PC-3 (cell line): ENCODE measurements at regions of chr15 and their contacts with region 1.

Region 1: GRCh38 chr15:83559310-83559966 is 94.5 kb upstream of the ADAMTSL3 start:
- DNase-seq: peak; percentile 87
- ATAC-seq: peak; percentile 81
- H3K4me3 ChIP-seq: no peak overlapping the region
- H3K27ac ChIP-seq: no peak overlapping the region
- H3K4me1 ChIP-seq: no peaks in the 10 kb centered on the region
- H3K27me3 ChIP-seq: no peaks in the 10 kb centered on the region
- CTCF ChIP-seq: peak; percentile 94

Region 2: DNA sequence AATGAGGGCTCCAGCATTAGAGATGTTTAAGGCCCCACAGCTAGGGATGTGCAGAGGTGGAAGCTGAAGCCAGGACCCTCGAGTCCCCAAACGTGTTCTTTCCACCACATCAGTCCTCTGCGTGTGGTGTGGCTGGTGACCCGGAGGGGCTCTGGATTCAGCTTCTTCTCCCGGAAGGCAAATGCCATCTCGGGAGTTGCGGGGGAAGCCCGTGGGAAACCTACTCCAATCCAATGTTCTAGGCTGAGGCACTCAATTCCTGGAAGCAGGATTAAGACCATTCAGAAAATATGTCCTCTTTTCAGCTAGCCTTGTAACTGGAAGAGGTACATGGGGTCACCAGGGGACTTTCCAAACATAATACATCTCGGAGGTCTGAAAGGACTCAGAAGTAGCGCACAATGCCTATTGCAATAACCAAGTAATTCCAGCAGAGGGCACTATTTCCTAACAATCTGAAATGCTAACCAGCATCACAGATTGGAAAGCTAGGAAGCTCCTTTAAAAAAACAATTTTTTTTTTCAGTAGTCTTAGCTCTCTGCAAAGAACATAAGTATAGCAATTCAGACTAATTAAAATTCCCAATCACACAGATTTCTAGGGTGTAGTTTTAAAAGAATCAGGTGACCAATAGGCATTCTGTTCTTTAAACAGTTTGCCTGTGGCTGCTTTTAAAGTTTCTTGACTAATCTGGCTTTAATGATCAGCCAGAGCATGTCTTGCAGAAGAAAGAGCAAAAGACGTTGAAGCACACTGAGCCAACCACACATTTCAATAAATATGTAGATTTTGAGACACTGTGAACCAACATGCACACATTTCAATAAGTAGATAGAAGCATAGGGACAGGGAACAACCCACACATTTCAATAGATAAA is 311.0 kb before region 1 on chr15:
- CTCF ChIA-PET with region 1: interaction called, 3 read pairs
- POLR2A ChIA-PET with region 1: no interaction called
- intact Hi-C with region 1: loop called (anchors 1 kb)
- DNase-seq: peak; percentile 94
- ATAC-seq: peak; percentile 72
- H3K4me3 ChIP-seq: peak overlapping the region; percentile 43; the same call in 1 of the 2 replicates
- H3K27ac ChIP-seq: no peak overlapping the region
- H3K4me1 ChIP-seq: peaks cover 11% of the 10 kb centered on the region
- H3K27me3 ChIP-seq: no peaks in the 10 kb centered on the region
- CTCF ChIP-seq: peak; percentile 90

Region 3: DNA sequence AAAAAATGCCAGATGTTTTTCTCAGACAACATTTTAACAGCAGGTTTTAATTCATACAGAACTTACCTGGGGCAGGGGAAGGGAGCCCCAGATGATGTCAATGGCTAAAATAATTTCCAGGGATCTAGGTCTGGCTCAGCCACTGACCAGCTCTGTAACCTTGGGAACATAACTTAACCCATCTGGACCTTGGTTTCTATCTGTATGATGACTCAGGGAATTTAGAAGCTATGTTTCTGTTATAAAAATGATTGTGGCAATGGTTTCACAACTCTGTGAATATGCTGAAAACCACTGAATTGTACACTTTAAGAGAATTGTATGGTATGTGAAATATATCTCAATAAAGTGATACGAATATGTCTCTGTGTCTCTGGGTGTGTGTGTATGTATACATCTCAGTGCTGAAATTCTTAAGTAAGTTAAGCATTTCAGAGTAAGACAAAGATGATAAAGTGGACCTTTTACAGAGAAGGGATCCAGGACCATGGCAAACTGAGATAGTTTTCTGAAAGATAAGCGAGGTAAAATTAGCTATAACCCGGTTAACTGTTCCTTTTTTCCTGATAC is 109.4 kb before region 1 on chr15:
- CTCF ChIA-PET with region 1: interaction called, 4 read pairs
- POLR2A ChIA-PET with region 1: interaction called, 19 read pairs
- intact Hi-C with region 1: no loop called
- DNase-seq: no peak
- ATAC-seq: no peak
- H3K4me3 ChIP-seq: no peak overlapping the region
- H3K27ac ChIP-seq: no peak overlapping the region
- H3K4me1 ChIP-seq: no peaks in the 10 kb centered on the region; the same call in 1 of the 2 replicates
- H3K27me3 ChIP-seq: no peaks in the 10 kb centered on the region
- CTCF ChIP-seq: no peak

Region 4: DNA sequence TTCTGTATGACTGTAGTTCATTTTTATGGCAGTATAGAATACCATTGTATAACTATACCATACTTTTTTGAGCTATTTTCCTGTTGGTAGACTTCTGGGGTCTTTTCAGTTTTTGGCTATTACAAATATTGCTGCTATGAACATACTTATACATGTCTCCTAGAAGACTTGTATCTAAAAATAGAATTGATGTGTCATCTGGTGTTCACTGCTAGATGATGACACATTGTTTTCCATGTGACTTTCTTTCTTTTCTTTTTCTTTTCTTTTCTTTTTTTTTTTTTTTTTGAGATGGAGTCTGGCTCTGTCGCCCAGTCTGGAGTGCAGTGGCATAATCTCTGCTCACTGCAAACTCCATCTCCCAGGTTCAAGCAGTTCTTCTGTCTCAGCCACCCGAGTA is 42.5 kb before region 1 on chr15:
- CTCF ChIA-PET with region 1: no interaction called
- POLR2A ChIA-PET with region 1: no interaction called
- intact Hi-C with region 1: no loop called
- DNase-seq: peak; percentile 51
- ATAC-seq: no peak
- H3K4me3 ChIP-seq: no peak overlapping the region
- H3K27ac ChIP-seq: no peak overlapping the region
- H3K4me1 ChIP-seq: 0 out of 2 replicates have a peak, but pooled peaks cover 2% of the 10 kb centered on the region
- H3K27me3 ChIP-seq: no peaks in the 10 kb centered on the region
- CTCF ChIP-seq: no peak

Region 5: DNA sequence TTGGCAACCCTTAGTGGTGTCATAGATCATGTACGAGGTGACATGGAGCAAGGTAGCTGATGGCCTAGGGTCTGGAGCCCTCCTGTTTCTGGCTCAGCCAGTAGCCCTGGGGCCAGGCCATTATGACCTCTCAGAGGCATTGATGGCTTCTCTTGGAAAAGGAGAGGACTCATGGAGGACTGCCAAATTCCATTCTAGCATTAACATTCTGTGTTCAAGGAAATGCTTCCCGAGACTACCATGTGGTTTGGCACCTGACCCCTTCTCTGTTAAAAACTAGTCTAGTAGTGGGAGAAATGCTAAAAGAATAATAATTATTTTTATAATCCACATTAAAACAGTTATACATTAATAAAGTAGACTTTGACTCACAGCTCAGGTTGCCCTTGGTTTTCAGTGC is 54.3 kb after region 1 on chr15:
- CTCF ChIA-PET with region 1: no interaction called
- POLR2A ChIA-PET with region 1: no interaction called
- intact Hi-C with region 1: no loop called
- DNase-seq: peak; percentile 23
- ATAC-seq: no peak
- H3K4me3 ChIP-seq: no peak overlapping the region
- H3K27ac ChIP-seq: no peak overlapping the region
- H3K4me1 ChIP-seq: no peaks in the 10 kb centered on the region
- H3K27me3 ChIP-seq: no peaks in the 10 kb centered on the region
- CTCF ChIP-seq: no peak

Region 6: DNA sequence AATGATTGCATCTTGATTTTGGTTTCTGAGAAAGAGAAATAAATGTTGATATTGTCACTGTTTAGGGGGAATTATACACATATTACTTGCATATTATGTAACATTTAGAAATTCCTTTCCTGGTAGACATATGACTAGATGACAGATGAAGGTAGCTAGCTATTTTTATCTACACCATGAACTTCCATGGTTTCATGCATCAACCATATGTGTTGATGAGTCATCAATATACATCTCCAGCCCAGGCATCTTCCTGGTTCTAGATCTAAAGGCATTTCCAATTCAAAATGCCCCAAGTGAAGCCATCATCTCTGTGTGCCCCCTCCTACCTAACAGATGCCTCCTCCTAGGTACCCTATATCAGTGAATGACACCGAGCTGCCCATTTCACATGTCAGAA is 85.0 kb after region 1 on chr15:
- CTCF ChIA-PET with region 1: no interaction called
- POLR2A ChIA-PET with region 1: no interaction called
- intact Hi-C with region 1: no loop called
- DNase-seq: no peak
- ATAC-seq: no peak
- H3K4me3 ChIP-seq: no peak overlapping the region
- H3K27ac ChIP-seq: no peak overlapping the region
- H3K4me1 ChIP-seq: no peaks in the 10 kb centered on the region
- H3K27me3 ChIP-seq: no peaks in the 10 kb centered on the region
- CTCF ChIP-seq: no peak